ENCODE measurements at regions of chr7 and their contacts with region 1.

Region 1: GRCh38 chr7:2632733-2633537 is 1.1 kb downstream of the TTYH3 start:
- DNase-seq: peak; percentile 61
- H3K4me3 ChIP-seq: peak overlapping the region; percentile 80 to 97 (median 83)
- H3K27ac ChIP-seq: peak overlapping the region; percentile 90
- H3K4me1 ChIP-seq: peaks cover 31% of the 10 kb centered on the region
- H3K27me3 ChIP-seq: no peaks in the 10 kb centered on the region
- CTCF ChIP-seq: no peak
- POLR2A ChIP-seq: no peak

Region 2: DNA sequence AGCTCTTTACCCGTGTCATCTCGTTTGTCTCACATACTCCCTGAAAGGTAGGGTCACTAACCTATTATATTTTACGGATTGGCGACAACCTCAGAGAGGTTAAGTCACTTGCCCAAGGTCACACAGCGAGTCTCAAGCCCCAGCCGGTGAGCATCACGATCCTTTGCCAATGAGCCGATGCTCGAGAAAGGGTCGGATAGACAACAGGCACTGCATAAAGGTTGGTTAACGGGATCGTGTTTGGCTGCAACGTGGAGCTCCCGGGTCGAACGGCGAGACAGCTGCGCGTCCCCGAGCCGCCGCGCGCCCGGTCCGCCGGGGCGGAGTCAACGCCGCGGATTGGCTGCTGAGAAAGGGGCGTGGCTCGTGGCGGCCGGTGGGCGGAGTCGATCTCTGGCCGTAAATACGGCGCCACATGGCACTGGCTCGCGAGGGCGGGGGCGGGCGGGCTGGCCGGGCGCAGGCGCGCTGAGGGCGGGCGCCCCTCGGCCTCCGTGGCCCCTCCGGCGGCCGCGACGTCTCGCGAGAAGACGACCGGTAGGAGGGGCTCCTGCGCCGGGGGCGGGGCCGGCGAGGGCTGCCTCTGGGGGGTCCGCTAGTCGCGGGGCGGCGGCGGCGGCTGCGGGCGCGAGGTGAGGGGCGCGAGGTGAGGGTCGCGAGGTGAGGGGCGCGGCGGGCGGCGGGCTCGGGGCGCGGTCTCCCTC is 229.8 kb before region 1 on chr7 and contains the start of gene CHST12:
- CTCF ChIA-PET with region 1: no interaction called
- POLR2A ChIA-PET with region 1: no interaction called
- dilution Hi-C with region 1: no loop called
- intact Hi-C with region 1: loop called (anchors 2 kb)
- DNase-seq: peak; percentile 94
- H3K4me3 ChIP-seq: peak within 1 kb of the TSS; percentile 68 to 75 (median 68)
- H3K27ac ChIP-seq: no peak within 1 kb of the TSS
- H3K4me1 ChIP-seq: peaks cover 24% of the 10 kb centered on the region
- H3K27me3 ChIP-seq: no peaks in the 10 kb centered on the region
- CTCF ChIP-seq: no peak
- POLR2A ChIP-seq: peak; percentile 66
- total RNA-seq, gene CHST12: 28.8 and 30.2 TPM in 2 replicates

Region 3: GRCh38 chr7:2477447-2478398 is 155.2 kb before region 1 on chr7:
- CTCF ChIA-PET with region 1: no interaction called
- POLR2A ChIA-PET with region 1: no interaction called
- dilution Hi-C with region 1: no loop called
- intact Hi-C with region 1: loop called (anchors 10 kb)
- DNase-seq: peak; percentile 53
- H3K4me3 ChIP-seq: no peak overlapping the region
- H3K27ac ChIP-seq: no peak overlapping the region
- H3K4me1 ChIP-seq: no peaks in the 10 kb centered on the region
- H3K27me3 ChIP-seq: peaks cover 0 to 4% of the 10 kb centered on the region in 2 experiments
- CTCF ChIP-seq: peak; percentile 81 to 95
- POLR2A ChIP-seq: no peak

Region 4: DNA sequence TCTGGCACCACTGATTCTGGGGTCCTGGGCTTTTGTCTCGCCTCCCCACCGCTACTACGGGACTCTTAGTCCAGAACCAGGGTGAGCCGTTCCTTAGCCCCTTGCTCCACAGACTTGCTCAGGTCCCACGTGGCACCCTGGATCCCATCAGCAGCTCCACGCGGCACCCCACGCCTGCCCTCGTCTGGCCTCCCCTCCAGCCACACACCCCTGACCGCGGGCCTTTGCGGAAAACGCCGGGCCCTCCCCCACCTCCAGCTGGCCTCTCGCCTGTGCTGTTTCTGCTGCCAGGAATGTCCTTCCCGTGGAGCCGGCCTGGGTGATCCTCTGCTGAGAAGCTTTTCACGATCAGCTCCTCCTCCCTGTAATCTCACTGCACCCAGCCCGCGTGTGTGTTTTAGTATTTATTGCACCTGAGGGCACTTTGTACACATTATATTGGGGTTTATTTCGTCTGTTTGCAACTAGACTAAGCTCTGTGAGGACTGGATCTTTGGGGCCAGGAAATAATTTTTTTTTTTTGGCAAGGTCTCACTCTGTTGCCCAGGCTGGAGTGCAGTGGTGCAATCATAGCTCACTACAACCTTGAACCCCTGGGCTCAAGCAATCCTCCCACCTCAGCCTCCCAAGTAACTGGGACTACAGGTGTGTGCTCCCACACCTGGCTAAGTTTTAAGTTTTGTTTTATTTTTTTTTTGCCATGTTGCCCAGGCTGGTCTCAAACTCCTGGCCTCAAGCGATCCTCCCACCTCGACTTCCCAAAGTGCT is 11.7 kb before region 1 on chr7:
- CTCF ChIA-PET with region 1: no interaction called
- POLR2A ChIA-PET with region 1: interaction called, 5 read pairs
- dilution Hi-C with region 1: no loop called
- intact Hi-C with region 1: loop called (anchors 1 kb)
- DNase-seq: peak; percentile 49
- H3K4me3 ChIP-seq: no peak overlapping the region
- H3K27ac ChIP-seq: no peak overlapping the region
- H3K4me1 ChIP-seq: peaks cover 14% of the 10 kb centered on the region
- H3K27me3 ChIP-seq: no peaks in the 10 kb centered on the region
- CTCF ChIP-seq: no peak
- POLR2A ChIP-seq: no peak

Region 5: GRCh38 chr7:2886900-2887299 is 254.0 kb after region 1 on chr7:
- CTCF ChIA-PET with region 1: no interaction called
- POLR2A ChIA-PET with region 1: no interaction called
- dilution Hi-C with region 1: no loop called
- intact Hi-C with region 1: no loop called
- DNase-seq: peak; percentile 62
- H3K4me3 ChIP-seq: no peak overlapping the region
- H3K27ac ChIP-seq: no peak overlapping the region
- H3K4me1 ChIP-seq: no peaks in the 10 kb centered on the region
- H3K27me3 ChIP-seq: no peaks in the 10 kb centered on the region
- CTCF ChIP-seq: peak; percentile 84 to 90
- POLR2A ChIP-seq: no peak